A673 (cell line): ENCODE measurements at regions of chr12 and their contacts with region 1.

Region 1: GRCh38 chr12:76031537-76032073 is at the start of gene PHLDA1:
- DNase-seq: peak; percentile 97
- H3K4me3 ChIP-seq: peak within 1 kb of the TSS; percentile 84
- H3K27ac ChIP-seq: peak within 1 kb of the TSS; percentile 86
- H3K4me1 ChIP-seq: peaks cover 9% of the 10 kb centered on the region
- H3K27me3 ChIP-seq: no peaks in the 10 kb centered on the region
- CTCF ChIP-seq: peak; percentile 68
- total RNA-seq, gene PHLDA1: 3.4 and 4.9 TPM in 2 replicates

Region 2: DNA sequence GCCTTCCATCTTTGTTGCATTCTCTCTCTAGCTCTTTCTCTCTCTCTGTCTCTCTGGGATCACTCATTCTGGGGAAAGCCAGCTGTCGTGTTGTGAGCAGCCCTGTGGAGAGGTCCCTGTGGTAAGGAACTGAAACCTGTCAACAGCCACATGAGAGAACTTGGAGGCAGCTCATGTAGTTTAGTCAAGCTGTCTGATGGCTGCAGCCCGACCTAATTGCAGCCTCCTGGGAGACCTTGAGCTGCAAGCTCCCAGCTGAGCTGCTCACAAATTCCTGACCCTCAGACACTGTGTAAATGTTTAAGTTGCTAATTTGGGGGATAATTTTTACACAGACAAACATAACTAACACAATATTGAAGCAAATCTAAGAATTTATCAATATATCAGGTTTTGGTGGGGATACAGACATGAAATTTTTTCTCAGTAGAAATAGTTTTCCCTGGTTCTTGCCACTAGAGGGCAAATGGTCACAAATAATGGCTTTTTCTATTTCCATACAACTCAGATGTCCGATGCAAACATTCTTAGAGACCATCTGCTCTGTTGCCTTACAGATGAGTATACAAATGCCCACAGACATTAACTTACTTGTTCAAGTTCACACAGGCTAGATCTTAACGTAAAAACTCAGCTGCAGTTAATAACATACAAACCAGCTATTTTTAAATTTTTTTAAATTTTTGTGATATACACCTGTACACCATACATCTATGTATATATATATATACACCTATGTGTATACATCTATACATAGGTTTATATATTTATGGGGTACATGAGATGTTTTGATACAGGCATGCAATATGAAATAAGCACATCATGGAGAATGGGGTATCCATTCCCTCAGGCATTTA is 504.7 kb before region 1 on chr12:
- CTCF ChIA-PET with region 1: interaction called, 7 read pairs
- POLR2A ChIA-PET with region 1: no interaction called
- intact Hi-C with region 1: loop called (anchors 2 kb)
- DNase-seq: peak; percentile 70
- H3K4me3 ChIP-seq: no peak overlapping the region
- H3K27ac ChIP-seq: no peak overlapping the region
- H3K4me1 ChIP-seq: no peaks in the 10 kb centered on the region
- H3K27me3 ChIP-seq: no peaks in the 10 kb centered on the region
- CTCF ChIP-seq: peak; percentile 67

Region 3: GRCh38 chr12:75623631-75624118 is 407.9 kb before region 1 on chr12:
- CTCF ChIA-PET with region 1: interaction called, 4 read pairs
- POLR2A ChIA-PET with region 1: no interaction called
- intact Hi-C with region 1: loop called (anchors 5 kb)
- DNase-seq: peak; percentile 57
- H3K4me3 ChIP-seq: no peak overlapping the region
- H3K27ac ChIP-seq: no peak overlapping the region
- H3K4me1 ChIP-seq: no peaks in the 10 kb centered on the region
- H3K27me3 ChIP-seq: no peaks in the 10 kb centered on the region
- CTCF ChIP-seq: peak; percentile 36; the same call in 1 of the 2 replicates

Region 4: DNA sequence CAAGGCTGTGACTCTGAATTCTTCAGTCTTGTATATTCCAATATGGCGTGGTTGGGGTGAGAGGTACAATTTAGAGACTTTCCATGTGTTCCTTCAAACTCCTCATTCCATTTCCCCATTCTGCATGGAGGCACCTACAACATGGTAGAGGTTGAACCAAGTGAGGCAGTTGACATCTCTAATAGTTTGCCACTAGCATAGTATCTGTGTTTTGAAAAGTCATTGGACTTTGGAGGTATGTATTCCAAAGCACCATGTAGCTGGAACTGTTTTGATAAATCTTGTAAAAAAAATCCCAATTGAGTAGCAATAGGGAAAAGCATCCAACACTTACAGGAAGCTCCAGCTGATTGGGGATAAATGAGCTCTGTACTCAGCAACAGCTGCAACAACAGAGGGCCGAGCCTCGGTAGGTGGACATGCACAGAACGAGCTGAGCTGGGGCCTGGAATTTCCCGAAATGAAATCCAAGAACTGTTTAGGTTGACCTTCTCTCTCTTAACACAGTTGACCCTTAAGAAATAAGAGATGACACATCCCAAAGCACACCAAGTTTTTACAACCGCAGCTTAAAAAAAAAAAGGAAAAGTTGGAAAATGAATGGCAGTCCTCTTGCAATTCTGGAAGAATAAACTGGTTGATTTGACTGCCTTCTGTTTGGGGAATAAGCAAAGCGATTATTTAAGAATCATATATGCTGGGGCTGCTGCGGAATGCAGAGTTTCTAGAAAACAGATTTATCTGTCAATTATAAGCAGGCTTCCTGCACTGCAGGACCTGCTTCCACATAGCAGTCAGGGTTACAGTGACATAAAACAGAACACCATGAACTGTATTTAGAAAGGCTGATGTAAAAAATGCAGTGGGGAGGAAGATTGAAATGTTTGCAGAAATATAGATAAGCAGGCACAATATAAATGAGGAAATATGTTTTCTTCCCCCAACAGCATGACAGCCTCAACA is 325.6 kb before region 1 on chr12:
- CTCF ChIA-PET with region 1: no interaction called
- POLR2A ChIA-PET with region 1: no interaction called
- intact Hi-C with region 1: loop called (anchors 5 kb)
- DNase-seq: peak; percentile 68
- H3K4me3 ChIP-seq: no peak overlapping the region
- H3K27ac ChIP-seq: peak overlapping the region; percentile 86
- H3K4me1 ChIP-seq: peaks cover 63% of the 10 kb centered on the region
- H3K27me3 ChIP-seq: no peaks in the 10 kb centered on the region
- CTCF ChIP-seq: no peak

Region 5: DNA sequence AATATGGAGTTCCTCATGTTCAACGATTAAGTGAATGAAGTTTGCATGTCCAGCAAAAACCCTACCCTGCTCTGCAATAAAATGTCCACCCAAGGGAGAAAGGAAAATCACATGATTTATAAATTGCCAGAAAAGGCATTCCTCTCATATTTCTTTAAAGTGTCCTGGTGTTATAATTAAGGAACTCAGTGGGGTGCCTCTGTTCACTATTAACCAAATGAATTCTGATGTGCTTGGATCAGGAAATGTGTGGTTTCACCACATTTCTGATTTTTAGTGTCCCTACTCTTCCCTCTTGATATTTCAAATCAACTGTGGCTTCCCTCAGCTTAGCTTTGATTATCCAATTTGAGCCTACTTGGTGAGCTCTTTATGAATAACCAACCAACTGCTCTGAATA is 208.1 kb before region 1 on chr12:
- CTCF ChIA-PET with region 1: no interaction called
- POLR2A ChIA-PET with region 1: no interaction called
- intact Hi-C with region 1: loop called (anchors 2 kb)
- DNase-seq: peak; percentile 92
- H3K4me3 ChIP-seq: no peak overlapping the region
- H3K27ac ChIP-seq: no peak overlapping the region
- H3K4me1 ChIP-seq: peaks cover 26% of the 10 kb centered on the region
- H3K27me3 ChIP-seq: no peaks in the 10 kb centered on the region
- CTCF ChIP-seq: no peak

Region 6: GRCh38 chr12:75944097-75944904 is 87.3 kb before region 1 on chr12:
- CTCF ChIA-PET with region 1: no interaction called
- POLR2A ChIA-PET with region 1: no interaction called
- intact Hi-C with region 1: loop called (anchors 5 kb)
- DNase-seq: peak; percentile 91
- H3K4me3 ChIP-seq: no peak overlapping the region
- H3K27ac ChIP-seq: peak overlapping the region; percentile 71
- H3K4me1 ChIP-seq: peaks cover 19% of the 10 kb centered on the region
- H3K27me3 ChIP-seq: no peaks in the 10 kb centered on the region
- CTCF ChIP-seq: no peak